ENCODE measurements at regions of chr2 and their contacts with region 1.

Region 1: GRCh38 chr2:187499941-187500532 is 52.0 kb upstream of the CALCRL start:
- H3K4me3 ChIP-seq: no peak overlapping the region
- H3K27ac ChIP-seq: no peak overlapping the region
- H3K4me1 ChIP-seq: peaks cover 14% of the 10 kb centered on the region
- CTCF ChIP-seq: peak; percentile 65; the same call in 1 of the 2 replicates

Region 2: GRCh38 chr2:186713691-186714090 is 786.3 kb before region 1 on chr2:
- CTCF ChIA-PET with region 1: interaction called, 12 read pairs
- POLR2A ChIA-PET with region 1: no interaction called
- H3K4me3 ChIP-seq: no peak overlapping the region
- H3K27ac ChIP-seq: no peak overlapping the region
- H3K4me1 ChIP-seq: no peaks in the 10 kb centered on the region
- CTCF ChIP-seq: no peak

Region 3: DNA sequence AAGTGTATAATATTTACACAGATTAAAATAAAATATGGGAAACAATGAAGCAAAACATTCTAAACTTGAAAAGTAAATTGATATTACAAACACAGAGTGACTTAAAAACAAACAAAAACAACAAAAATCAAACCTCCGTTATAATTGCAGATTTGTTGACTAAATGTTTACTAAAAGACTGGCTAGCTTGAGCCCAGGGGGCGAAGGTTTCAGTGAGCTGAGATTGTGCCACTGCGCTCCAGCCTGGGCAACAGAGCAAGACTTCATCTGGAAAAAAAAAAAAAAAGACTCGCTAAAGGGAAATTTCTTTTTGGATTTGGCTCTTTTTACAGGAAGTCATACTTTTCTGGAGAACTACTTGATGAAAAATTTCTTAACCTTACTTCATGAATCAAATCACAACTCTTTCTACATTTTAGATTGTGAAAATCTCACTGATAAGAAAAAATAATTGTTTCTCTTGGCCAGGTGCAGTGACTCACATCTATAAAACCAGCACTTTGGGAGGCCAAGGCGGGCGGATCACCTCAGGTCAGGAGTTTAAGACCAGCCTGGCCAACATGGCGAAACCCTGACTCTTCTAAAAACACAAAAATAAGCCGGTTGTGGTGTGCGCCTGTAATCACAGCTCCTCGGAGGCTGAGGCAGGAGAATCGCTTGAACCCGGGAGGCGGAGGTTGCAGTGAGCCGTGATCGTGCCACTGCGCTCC is 44.5 kb after region 1 on chr2:
- CTCF ChIA-PET with region 1: interaction called, 11 read pairs
- POLR2A ChIA-PET with region 1: no interaction called
- H3K4me3 ChIP-seq: no peak overlapping the region
- H3K27ac ChIP-seq: peak overlapping the region; percentile 75
- H3K4me1 ChIP-seq: peaks cover 23% of the 10 kb centered on the region
- CTCF ChIP-seq: no peak

Region 4: DNA sequence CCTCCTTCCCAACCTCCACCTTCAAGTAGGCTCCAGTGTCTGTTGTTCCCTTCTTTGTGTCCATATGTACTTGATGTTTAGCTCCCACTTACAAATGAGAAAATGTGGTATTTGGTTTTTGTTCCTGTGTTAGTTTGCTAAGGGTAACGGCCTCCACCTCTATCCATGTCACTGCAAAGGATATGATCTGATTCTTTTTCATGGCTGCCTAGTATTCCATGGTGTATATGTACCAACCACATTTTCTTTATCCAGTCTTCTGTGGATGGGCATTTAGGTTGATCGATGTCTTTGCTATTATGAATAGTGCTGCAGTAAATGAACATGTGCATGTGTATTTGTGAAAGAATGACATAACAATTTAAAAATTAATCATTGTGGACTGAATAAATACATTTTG is 73.7 kb after region 1 on chr2:
- CTCF ChIA-PET with region 1: interaction called, 352 read pairs
- POLR2A ChIA-PET with region 1: no interaction called
- H3K4me3 ChIP-seq: no peak overlapping the region
- H3K27ac ChIP-seq: no peak overlapping the region
- H3K4me1 ChIP-seq: peaks cover 11% of the 10 kb centered on the region; the same call in 1 of the 2 replicates
- CTCF ChIP-seq: no peak

Region 5: DNA sequence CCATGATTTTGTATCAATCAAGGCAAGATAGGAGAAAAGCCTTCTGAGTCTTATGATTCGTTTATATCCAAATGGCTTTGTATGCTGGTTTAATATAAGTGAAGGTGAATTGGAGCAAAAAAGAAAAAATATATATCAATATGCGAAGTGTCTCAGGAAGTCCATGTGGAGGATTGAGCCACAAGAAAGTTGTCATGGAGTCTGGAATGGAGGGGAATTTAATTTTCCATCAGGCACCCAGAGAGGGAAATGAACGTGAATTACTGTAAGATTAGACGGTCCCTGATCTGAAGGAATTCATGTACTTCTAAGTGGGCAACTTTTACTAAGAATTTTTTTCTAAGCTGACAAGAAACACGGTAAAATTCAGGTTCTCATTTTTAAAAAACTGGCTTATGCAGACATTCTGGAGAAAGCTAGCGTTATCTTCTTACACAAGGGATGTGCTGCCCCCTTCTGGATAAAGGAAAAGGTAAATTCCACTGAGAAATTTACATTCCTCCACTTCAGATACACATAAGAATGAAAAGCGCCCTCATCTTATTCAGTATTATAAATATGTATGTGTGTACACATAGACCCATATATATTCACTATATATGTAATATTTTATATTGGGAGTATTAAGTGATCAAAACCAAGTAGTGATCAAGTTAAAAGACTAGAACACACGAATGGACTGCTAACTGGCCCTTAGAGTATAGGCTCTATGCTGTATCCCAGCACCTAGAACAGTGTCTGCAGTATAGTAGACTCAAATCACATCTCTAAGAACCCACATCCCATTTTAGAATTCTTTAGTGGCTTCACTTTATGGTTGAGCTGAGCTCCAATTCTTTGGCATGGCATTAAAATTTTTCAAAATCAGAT is 343.2 kb after region 1 on chr2:
- CTCF ChIA-PET with region 1: interaction called, 39 read pairs
- POLR2A ChIA-PET with region 1: no interaction called
- H3K4me3 ChIP-seq: no peak overlapping the region
- H3K27ac ChIP-seq: no peak overlapping the region
- H3K4me1 ChIP-seq: no peaks in the 10 kb centered on the region
- CTCF ChIP-seq: no peak; the same call in 1 of the 2 replicates

Region 6: DNA sequence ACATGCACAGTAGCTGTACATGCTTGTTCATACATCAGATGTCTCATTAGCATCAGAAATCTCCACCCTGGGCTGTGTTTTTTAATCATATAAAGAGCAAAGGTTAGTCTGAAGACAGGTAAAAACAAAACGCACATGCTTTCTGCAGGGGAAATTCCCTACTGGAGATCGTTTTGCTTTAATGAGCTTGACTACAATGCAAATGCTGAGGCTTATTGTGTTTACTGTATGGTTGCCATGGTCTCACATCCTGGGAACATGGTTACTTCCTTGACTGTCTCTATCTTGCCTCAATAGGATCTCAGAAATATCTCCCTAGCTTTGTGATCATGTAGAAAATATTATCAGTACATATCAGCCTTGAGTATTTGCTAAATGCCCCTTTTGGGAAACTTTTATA is 390.7 kb after region 1 on chr2:
- CTCF ChIA-PET with region 1: no interaction called
- POLR2A ChIA-PET with region 1: no interaction called
- H3K4me3 ChIP-seq: no peak overlapping the region
- H3K27ac ChIP-seq: no peak overlapping the region
- H3K4me1 ChIP-seq: no peaks in the 10 kb centered on the region
- CTCF ChIP-seq: no peak

Measured in HEK293 (cell line).